Caco-2 (cell line): ENCODE measurements at regions of chr14 and their contacts with region 1.

Region 1: DNA sequence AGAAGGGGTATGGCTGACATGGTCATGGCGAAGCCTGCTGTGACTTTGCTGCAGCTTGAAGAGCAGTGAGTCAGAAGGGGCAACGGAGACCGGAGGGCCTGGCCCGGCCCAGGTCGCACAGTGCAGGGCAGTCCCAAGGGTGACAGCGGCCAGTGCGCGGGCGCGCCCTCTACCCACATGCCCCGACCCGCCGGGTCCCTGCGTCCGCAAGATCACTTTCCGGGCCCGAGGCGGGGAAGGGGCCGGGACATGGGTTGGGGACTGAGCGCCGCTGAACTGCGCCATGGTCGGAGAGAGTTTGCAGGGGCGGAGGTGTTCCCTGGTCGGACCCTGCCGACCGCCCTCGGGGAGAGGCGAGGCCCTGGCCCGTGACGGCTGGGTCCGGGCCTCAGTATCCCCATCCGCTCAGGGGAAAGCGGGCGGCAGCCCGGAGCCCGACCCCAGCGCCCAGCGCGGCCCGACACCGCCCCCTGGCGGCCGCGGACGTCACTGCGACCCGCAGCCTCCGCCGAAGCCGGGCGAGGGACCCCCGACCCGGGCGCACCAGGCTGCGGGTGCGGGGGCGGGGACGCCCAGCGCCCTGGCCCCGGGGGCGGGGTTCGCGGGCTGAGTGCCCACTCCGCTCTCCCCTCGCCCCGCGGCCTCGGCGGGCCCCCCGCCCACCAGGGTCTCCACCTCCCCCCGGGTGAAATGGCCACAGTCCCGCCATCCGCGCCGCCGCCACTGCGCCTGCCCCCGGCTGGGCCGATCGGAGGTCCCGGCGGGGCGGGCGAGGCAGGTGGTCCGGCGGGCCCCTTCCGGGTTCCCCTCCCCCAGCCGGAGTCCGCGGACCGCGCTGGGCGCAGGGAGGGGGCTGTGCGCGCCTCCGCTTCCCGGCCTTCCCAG is 7.2 kb upstream of the ANKRD9 start:
- DNase-seq: peak; percentile 69 to 82
- H3K4me3 ChIP-seq: peak overlapping the region; percentile 67
- H3K4me3 Mint-ChIP-seq: peak overlapping the region; percentile 85
- H3K27ac Mint-ChIP-seq: no peak overlapping the region
- H3K4me1 ChIP-seq: no peaks in the 10 kb centered on the region; the same call in 1 of the 2 replicates
- H3K4me1 Mint-ChIP-seq: no peaks in the 10 kb centered on the region
- H3K27me3 ChIP-seq: no peaks in the 10 kb centered on the region
- H3K27me3 Mint-ChIP-seq: no peaks in the 10 kb centered on the region
- CTCF ChIP-seq: peak; percentile 48 to 89

Region 2: GRCh38 chr14:102437997-102438915 is 78.5 kb before region 1 on chr14:
- CTCF ChIA-PET with region 1: interaction called, 13 read pairs
- POLR2A ChIA-PET with region 1: no interaction called
- intact Hi-C with region 1: loop called (anchors 1 kb)
- DNase-seq: peak; percentile 85 to 89
- H3K4me3 ChIP-seq: no peak overlapping the region; the same call in 1 of the 2 replicates
- H3K4me3 Mint-ChIP-seq: peak overlapping the region; percentile 28
- H3K27ac Mint-ChIP-seq: no peak overlapping the region
- H3K4me1 ChIP-seq: no peaks in the 10 kb centered on the region
- H3K4me1 Mint-ChIP-seq: no peaks in the 10 kb centered on the region
- H3K27me3 ChIP-seq: no peaks in the 10 kb centered on the region
- H3K27me3 Mint-ChIP-seq: no peaks in the 10 kb centered on the region
- CTCF ChIP-seq: peak; percentile 77 to 84

Region 3: DNA sequence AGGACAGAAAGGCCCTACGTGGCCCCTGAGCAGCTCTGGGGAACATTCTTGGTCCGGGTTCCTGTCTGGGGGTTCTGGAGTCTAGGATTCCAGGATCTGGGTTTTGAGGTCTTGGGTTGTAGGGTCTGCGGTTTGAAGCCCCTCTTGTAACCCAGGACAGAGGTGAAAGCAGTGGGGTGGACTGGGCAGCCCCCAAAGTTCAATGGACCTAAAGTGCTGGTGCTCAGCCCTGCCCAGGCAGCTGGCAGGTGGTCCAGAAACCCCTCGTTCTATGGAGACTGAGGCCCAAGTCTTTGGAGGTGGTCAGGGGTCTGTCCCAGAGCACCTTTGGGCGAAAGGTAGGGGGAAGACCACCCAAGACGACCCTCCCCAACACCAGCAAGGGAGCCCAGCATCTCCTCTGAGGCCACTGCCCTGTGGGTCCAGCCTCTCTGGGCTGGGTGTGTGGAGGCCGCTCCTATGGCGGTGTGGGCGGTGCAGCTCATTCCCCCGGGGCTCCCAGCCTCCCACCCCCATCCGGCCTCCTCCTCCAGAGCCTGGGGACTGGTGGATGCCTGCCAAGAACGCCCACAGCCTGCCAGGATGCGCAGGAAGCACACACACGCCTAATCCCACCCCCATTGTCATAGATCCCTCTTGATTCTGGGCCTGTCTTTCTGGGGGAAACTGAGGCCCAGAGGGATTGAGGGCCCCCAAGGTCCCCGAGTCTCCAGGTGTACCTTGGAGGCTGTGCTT is 23.0 kb after region 1 on chr14:
- CTCF ChIA-PET with region 1: no interaction called
- POLR2A ChIA-PET with region 1: no interaction called
- intact Hi-C with region 1: no loop called
- DNase-seq: no peak
- H3K4me3 ChIP-seq: no peak overlapping the region
- H3K4me3 Mint-ChIP-seq: no peak overlapping the region
- H3K27ac Mint-ChIP-seq: no peak overlapping the region
- H3K4me1 ChIP-seq: peaks cover 10% of the 10 kb centered on the region
- H3K4me1 Mint-ChIP-seq: peaks cover 6% of the 10 kb centered on the region
- H3K27me3 ChIP-seq: no peaks in the 10 kb centered on the region
- H3K27me3 Mint-ChIP-seq: no peaks in the 10 kb centered on the region
- CTCF ChIP-seq: no peak

Region 4: DNA sequence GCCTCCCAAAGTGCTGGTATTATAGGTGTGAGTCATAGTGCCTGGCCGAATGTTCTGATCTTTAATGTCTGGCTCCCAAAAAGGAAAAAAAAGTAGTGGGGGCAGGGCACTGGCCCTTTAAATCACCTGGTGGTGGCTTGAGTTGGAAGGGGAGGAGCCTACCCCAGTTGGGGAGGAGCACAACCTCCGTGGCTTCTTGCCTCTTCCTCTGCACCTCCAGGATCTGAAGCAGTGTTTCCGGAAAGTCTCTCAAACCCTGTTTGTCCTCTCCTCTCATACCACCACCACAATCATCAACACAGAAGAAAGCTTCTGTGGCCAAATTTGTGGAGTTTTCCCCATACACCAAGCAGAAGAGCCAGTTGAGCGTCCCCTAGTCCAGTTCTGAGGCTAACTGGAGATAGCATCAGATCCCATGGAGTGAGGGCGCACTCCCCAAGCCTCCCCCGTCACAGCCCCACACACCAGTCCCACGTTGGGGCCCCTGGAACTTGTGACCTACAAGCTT is 51.4 kb after region 1 on chr14:
- CTCF ChIA-PET with region 1: interaction called, 10 read pairs
- POLR2A ChIA-PET with region 1: no interaction called
- intact Hi-C with region 1: no loop called
- DNase-seq: peak; percentile 72 to 81
- H3K4me3 ChIP-seq: no peak overlapping the region
- H3K4me3 Mint-ChIP-seq: peak overlapping the region; percentile 64
- H3K27ac Mint-ChIP-seq: peak overlapping the region; percentile 93
- H3K4me1 ChIP-seq: peaks cover 36% of the 10 kb centered on the region
- H3K4me1 Mint-ChIP-seq: peaks cover 16% of the 10 kb centered on the region
- H3K27me3 ChIP-seq: no peaks in the 10 kb centered on the region
- H3K27me3 Mint-ChIP-seq: no peaks in the 10 kb centered on the region
- CTCF ChIP-seq: no peak